ENCODE measurements at regions of chr11 and their contacts with region 1.

Region 1: DNA sequence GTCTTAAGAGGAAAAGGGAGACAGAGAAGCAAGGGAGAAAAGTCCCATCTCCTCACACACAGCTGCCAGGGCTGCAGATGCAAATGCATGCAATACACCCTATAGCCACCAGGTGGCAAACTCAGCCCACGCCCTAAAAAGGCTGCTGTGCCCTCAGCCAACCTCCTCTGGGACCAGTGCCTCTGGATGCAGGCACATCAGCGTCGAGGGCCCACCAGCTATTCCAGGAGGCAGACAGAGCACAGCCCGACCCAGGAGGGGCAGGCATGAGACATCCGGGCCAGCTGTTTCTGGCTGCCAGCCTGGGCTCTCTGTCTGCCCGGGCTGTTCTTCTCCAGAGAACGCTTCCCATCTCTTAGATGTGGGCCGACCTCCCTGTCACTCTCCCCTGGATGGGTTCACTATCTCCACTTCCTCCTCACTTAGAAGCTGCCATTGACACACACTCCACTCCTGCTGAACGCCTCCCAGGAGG is 39.7 kb downstream of the TPBGL start:
- DNase-seq: peak; percentile 41
- ATAC-seq: peak; percentile 97
- H3K4me3 ChIP-seq: no peak overlapping the region
- H3K27ac ChIP-seq: no peak overlapping the region
- H3K4me1 ChIP-seq: no peaks in the 10 kb centered on the region
- H3K27me3 ChIP-seq: no peaks in the 10 kb centered on the region
- CTCF ChIP-seq: peak; percentile 93 to 96 (median 93)
- POLR2A ChIP-seq: no peak
- RAD21 ChIP-seq: peak; percentile 99

Region 2: DNA sequence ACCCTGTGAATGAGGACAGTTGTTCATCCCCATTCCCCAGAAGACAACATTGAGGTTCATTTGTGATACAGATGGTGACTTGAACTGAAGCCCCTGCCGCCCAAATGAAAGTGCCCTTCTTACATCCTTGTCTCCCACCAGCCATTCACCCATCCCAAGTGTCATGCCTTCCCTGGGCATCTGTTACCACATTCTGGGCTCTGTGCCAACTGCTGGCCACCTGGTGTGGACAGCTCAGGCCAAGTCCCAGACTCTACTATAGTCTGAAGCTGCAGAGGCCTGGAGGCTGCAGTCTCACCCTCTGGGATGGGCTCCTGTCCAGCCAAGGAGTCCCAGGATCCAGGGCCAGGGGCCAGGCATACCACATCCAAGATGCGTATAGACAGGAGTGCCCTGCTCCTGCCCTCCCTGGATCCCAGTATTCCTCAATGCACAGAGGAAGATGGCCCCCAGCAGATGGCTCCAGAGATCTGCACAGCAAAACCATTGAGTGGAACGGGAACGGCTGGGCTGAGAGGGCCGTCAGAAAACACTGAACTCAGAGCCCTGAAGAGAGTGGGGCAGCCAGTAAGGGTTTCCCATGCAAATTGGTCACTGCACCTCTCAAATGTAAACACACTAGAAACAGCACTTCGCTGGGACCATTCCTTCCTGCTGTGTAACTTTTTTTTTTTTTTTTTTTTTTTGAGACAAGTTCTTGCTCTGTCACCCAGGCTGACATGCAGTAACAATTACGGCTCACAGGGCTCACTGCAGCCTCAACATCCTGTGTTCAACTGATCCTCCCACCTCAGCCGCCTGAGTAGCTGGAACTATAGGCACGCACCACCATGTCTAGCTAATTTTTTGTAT is 48.4 kb after region 1 on chr11:
- CTCF ChIA-PET with region 1: interaction called, 11 read pairs
- POLR2A ChIA-PET with region 1: interaction called, 3 read pairs
- RAD21 ChIA-PET with region 1: interaction called in 1 of 2 experiments, 3 read pairs
- intact Hi-C with region 1: no loop called
- DNase-seq: peak; percentile 35
- ATAC-seq: peak; percentile 58
- H3K4me3 ChIP-seq: no peak overlapping the region
- H3K27ac ChIP-seq: no peak overlapping the region
- H3K4me1 ChIP-seq: peaks cover 42 to 57% of the 10 kb centered on the region in 2 experiments
- H3K27me3 ChIP-seq: no peaks in the 10 kb centered on the region
- CTCF ChIP-seq: peak; percentile 48 to 79 (median 62)
- POLR2A ChIP-seq: no peak
- RAD21 ChIP-seq: peak; percentile 88

Region 3: GRCh38 chr11:75337195-75337654 is 57.0 kb after region 1 on chr11:
- CTCF ChIA-PET with region 1: no interaction called
- POLR2A ChIA-PET with region 1: no interaction called
- RAD21 ChIA-PET with region 1: no interaction called
- intact Hi-C with region 1: loop called (anchors 5 kb)
- DNase-seq: no peak
- ATAC-seq: no peak
- H3K4me3 ChIP-seq: no peak overlapping the region
- H3K27ac ChIP-seq: no peak overlapping the region
- H3K4me1 ChIP-seq: peaks cover 18 to 25% of the 10 kb centered on the region in 2 experiments
- H3K27me3 ChIP-seq: no peaks in the 10 kb centered on the region
- CTCF ChIP-seq: no peak
- POLR2A ChIP-seq: no peak
- RAD21 ChIP-seq: no peak

Region 4: DNA sequence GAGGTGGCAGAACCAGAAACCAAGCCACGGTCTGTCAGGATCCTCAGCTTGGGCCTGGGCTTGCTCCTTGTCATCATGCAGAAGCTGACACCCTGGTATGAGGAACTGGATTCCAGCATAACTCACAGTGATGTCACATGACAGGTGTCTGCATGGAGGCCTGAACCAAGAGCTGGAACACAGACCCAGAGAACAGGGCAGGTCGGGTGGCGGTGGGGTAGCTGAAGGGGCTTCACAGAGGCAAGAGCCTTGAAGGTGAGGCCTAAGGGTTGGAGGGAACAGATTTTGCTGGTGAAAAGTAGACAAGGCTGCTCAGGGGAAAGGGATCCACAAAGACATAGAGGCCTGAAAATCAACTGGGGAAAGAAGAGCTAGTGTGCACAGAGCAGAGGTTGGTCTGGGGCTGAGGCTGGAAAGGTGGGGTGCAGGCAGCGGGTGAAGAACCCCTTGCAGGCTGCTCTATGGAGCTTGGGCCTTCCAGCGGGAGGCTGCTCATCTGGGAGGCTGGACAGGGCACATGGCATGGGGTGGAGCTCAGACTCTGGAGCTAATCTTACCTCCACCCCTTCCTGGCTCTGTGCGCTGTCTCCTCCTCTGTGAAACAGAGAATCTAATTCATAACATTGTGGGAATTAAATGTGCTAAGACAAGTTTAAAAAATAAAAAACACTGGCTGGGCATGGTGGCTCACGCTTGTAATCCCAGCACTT is 100.6 kb after region 1 on chr11:
- CTCF ChIA-PET with region 1: interaction called, 57 read pairs
- POLR2A ChIA-PET with region 1: no interaction called
- RAD21 ChIA-PET with region 1: interaction called, 5 to 9 read pairs
- intact Hi-C with region 1: loop called (anchors 1 kb)
- DNase-seq: no peak
- ATAC-seq: peak; percentile 45; the same call in 1 of the 2 replicates
- H3K4me3 ChIP-seq: no peak overlapping the region
- H3K27ac ChIP-seq: no peak overlapping the region
- H3K4me1 ChIP-seq: peaks cover 15 to 34% of the 10 kb centered on the region in 2 experiments
- H3K27me3 ChIP-seq: no peaks in the 10 kb centered on the region
- CTCF ChIP-seq: no peak
- POLR2A ChIP-seq: no peak
- RAD21 ChIP-seq: no peak

Region 5: DNA sequence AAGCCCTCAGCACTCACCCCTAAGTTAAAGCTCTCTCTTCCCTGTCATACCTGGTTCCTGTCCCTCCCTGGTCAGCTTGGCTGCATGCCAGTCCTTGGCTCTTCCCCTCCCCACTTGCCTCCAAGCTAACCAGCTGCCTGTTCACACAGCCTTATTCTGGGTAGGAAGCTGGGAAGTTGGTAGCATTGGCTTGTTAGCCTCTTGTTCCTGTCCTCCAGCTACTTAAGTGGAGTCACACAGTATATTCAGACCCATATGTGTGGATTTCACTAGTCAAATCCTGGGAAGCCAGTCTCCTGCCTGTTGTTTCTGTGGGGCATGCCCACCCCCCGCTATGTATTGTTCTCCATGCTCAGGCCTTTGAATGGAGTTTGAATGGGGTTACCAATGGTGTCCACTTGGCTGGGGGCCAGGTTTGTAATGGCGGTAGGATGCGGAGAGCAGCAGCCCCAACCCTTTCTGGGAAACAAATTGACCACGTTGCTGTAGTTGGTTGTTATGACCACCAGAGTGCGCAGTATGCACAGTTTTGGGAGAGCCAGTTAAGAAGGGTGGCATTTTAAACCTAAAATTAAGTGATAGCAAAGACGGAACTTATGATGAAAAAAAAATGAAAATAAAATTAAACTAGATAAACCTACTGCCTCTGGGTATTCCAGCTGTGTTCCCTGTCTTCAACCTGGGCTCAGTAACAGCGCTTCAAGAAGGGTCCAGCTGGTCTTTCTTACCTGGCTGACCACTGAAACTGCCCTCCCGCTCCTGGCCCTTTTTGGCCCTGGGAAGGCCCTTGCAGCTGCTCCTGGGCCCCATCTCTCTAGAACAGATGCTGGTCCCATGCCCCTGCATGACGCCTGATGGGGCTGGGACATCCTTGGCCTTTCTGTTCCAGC is 108.4 kb after region 1 on chr11:
- CTCF ChIA-PET with region 1: interaction called, 57 read pairs
- POLR2A ChIA-PET with region 1: no interaction called
- RAD21 ChIA-PET with region 1: interaction called, 3 to 5 read pairs
- intact Hi-C with region 1: loop called (anchors 1 kb)
- DNase-seq: peak; percentile 81
- ATAC-seq: peak; percentile 78
- H3K4me3 ChIP-seq: no peak overlapping the region
- H3K27ac ChIP-seq: peak overlapping the region; percentile 8; the same call in 1 of the 2 replicates
- H3K4me1 ChIP-seq: peaks cover 23 to 48% of the 10 kb centered on the region in 2 experiments
- H3K27me3 ChIP-seq: no peaks in the 10 kb centered on the region
- CTCF ChIP-seq: peak; percentile 77 to 89 (median 88)
- POLR2A ChIP-seq: no peak
- RAD21 ChIP-seq: peak; percentile 93

Region 6: DNA sequence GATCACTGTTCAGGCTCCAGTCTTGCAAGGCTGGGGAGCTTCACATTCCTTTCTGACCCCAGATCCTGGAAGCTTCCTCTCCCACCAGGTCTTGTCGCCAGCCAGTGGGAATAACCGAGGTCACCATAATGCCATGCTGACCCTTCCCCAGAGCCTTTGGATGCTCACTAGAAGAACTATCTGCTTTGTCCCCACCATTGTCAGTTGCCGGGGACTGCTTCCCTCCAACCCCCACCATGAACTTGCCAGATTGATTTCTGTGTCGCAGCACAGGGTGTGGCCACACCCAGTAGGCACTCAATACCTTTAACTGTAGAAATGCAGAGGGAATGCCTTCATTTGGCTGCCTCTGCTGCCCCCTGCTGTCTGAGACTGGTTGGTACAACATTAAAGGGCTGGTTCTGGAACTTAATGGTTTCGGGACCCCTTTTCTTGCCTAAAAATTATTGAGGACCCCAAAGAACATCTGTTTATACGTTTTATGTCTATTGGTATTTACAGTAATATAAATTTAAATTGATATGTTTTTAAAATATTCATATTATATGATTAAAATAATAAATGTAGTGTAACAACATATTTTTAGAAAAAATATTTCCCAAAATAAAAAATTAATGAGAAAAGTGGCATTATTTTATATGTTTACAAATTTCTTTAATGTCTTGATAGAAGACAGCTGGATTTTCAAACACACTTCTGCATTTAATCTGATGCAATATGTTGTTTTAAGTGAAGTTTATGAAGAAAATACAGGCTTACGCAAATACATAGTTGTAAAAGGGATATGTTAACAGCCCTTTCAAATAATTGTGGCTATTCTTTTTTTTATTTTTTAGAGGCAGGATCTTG is 252.2 kb after region 1 on chr11:
- CTCF ChIA-PET with region 1: interaction called, 4 read pairs
- POLR2A ChIA-PET with region 1: no interaction called
- RAD21 ChIA-PET with region 1: no interaction called
- intact Hi-C with region 1: loop called (anchors 5 kb)
- DNase-seq: peak; percentile 56
- ATAC-seq: peak; percentile 45
- H3K4me3 ChIP-seq: peak overlapping the region in 1 of 2 experiments; percentile 35; a peak in 1 of 4 replicates
- H3K27ac ChIP-seq: no peak overlapping the region; the same call in 1 of the 2 replicates
- H3K4me1 ChIP-seq: peaks cover 33 to 51% of the 10 kb centered on the region in 2 experiments
- H3K27me3 ChIP-seq: no peaks in the 10 kb centered on the region
- CTCF ChIP-seq: peak; percentile 82 to 96 (median 82)
- POLR2A ChIP-seq: no peak
- RAD21 ChIP-seq: peak; percentile 99

Region 7: GRCh38 chr11:75896843-75897419 is 616.7 kb after region 1 on chr11:
- CTCF ChIA-PET with region 1: no interaction called
- POLR2A ChIA-PET with region 1: no interaction called
- RAD21 ChIA-PET with region 1: no interaction called
- intact Hi-C with region 1: no loop called
- DNase-seq: peak; percentile 12
- ATAC-seq: peak; percentile 52; the same call in 1 of the 2 replicates
- H3K4me3 ChIP-seq: no peak overlapping the region
- H3K27ac ChIP-seq: no peak overlapping the region
- H3K4me1 ChIP-seq: no peaks in the 10 kb centered on the region
- H3K27me3 ChIP-seq: no peaks in the 10 kb centered on the region
- CTCF ChIP-seq: peak; percentile 32 to 71 (median 69); a peak in 5 of 6 replicates
- POLR2A ChIP-seq: no peak
- RAD21 ChIP-seq: peak; percentile 82